PC-9 (cell line): ENCODE measurements at regions of chr10 and their contacts with region 1.

Region 1: GRCh38 chr10:83397806-83398205 is 741.5 kb upstream of the GHITM start:
- DNase-seq: no peak
- H3K4me3 ChIP-seq: no peak overlapping the region
- H3K27ac ChIP-seq: no peak overlapping the region
- H3K4me1 ChIP-seq: no peaks in the 10 kb centered on the region
- H3K27me3 ChIP-seq: no peaks in the 10 kb centered on the region
- CTCF ChIP-seq: no peak

Region 2: DNA sequence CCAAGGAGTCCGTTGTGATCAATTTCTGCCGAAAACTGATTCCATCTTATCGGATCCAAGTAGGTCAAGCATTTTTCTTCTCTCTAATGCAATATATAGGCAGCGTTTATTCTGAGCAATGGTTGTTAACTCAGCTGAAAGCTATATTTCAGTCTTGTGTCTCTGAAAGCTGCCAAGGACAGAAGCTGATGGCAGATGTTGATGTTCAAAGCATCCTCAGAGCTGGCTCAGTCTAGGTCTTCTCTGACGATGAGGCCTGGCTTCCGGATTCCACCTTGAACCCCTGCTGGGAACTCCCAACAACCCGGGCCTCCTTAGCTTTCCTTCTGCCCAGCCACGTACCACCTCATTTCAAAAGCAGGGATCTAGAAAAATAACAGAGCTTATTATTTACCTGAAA is 659.2 kb before region 1 on chr10:
- CTCF ChIA-PET with region 1: no interaction called
- POLR2A ChIA-PET with region 1: interaction called, 16 read pairs
- intact Hi-C with region 1: no loop called
- DNase-seq: no peak
- H3K4me3 ChIP-seq: no peak overlapping the region
- H3K27ac ChIP-seq: no peak overlapping the region
- H3K4me1 ChIP-seq: no peaks in the 10 kb centered on the region
- H3K27me3 ChIP-seq: no peaks in the 10 kb centered on the region
- CTCF ChIP-seq: no peak

Region 3: DNA sequence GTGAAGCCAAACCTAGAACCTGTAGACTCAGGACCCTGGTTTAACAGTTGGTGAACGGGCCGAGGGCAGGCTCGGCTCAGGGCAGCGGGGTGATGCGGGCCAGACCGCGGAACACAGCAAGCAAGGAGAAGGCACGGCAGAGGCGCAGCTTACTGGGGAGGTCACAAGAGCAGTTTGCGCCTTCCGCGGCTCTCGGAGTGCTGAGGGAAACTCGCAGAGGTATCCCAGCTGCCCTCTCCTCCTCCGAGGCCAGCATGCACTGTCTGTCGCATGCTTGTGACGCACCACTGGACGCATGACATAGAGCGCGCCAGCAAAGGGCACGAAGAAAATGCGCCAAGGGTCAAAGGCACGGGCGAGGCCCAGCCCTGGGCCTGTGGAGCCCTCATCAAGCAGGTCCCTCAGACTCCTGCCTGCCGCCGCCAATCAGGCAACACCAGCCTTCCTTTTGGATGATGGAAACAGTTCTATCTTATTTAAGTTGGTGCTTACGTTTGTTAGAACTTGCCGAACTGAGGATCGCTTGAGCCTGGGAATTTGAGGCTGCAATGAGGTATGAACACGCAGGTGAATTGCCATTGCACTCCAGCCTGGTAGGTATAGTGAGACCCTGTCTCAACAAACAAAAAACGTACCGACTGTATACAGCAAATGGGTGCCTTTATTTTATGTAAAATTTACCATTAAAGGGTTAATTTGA is 167.2 kb after region 1 on chr10:
- CTCF ChIA-PET with region 1: no interaction called
- POLR2A ChIA-PET with region 1: no interaction called
- intact Hi-C with region 1: no loop called
- DNase-seq: no peak
- H3K4me3 ChIP-seq: no peak overlapping the region
- H3K27ac ChIP-seq: no peak overlapping the region
- H3K4me1 ChIP-seq: no peaks in the 10 kb centered on the region
- H3K27me3 ChIP-seq: no peaks in the 10 kb centered on the region
- CTCF ChIP-seq: no peak